Calu3 (cell line): ENCODE measurements at regions of chr2 and their contacts with region 1.

Region 1: DNA sequence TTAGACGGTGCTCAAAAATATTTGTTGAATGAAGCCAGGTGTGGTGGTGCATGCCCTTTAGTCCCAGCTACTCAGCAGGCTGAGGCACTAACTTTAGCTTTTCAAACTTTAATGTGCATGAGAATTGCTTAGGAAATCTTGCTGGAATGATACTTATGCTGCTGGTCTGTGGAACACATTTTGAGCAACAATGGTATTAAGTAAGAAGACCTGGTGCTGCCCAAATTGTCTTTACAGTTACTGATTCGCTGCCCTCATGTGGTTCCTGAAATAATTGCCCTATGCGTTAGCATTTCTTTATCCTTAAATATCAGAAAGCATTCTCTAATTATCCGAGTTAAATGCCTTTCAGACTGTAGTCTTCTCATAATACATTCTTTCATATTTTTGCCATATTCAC is 76.0 kb upstream of the SESTD1 start:
- DNase-seq: peak; percentile 12
- H3K4me3 Mint-ChIP-seq: no peak overlapping the region
- H3K27ac Mint-ChIP-seq: no peak overlapping the region
- H3K4me1 Mint-ChIP-seq: peaks cover 38% of the 10 kb centered on the region
- H3K27me3 Mint-ChIP-seq: no peaks in the 10 kb centered on the region
- CTCF ChIP-seq: peak; percentile 22

Region 2: DNA sequence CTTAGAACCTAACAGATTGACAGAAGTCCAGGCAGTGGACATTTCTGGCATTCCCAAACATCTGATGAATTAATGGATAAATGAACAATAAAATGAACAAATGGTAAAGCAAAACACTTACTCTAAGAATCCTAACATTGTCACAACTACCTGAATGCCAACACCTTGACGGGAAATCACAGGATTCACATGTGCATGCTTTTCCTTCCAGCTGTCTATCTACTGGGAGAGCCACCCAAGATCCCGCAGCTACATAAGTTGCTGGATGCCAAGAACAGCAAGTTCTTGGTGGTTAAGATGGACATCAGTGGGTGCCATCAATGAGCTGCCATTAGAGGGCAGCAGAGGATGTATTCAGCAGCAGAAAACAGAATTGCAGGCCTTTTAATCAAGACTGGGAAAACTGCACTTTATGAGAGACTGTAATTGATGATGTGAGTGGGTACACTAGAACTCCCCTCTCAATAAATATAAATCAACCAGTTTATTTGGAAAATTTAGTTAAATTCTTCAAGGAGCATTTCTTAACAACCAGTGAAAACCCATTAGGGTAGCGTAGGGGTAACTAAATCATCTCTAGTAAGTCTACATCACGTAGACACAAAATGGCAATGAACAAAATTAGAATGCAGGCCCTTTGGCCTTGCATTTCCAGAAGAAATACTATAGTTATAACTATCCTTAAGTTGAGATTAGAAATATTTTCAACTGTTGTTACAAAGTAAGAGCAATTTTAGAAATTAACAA is 121.6 kb before region 1 on chr2:
- CTCF ChIA-PET with region 1: interaction called, 3 read pairs
- intact Hi-C with region 1: loop called (anchors 5 kb)
- DNase-seq: peak; percentile 72
- H3K4me3 Mint-ChIP-seq: no peak overlapping the region
- H3K27ac Mint-ChIP-seq: no peak overlapping the region
- H3K4me1 Mint-ChIP-seq: peaks cover 24% of the 10 kb centered on the region
- H3K27me3 Mint-ChIP-seq: no peaks in the 10 kb centered on the region
- CTCF ChIP-seq: peak; percentile 80

Region 3: GRCh38 chr2:179239195-179239594 is 101.5 kb before region 1 on chr2:
- CTCF ChIA-PET with region 1: no interaction called
- intact Hi-C with region 1: loop called (anchors 5 kb)
- DNase-seq: no peak
- H3K4me3 Mint-ChIP-seq: no peak overlapping the region
- H3K27ac Mint-ChIP-seq: peak overlapping the region; percentile 53
- H3K4me1 Mint-ChIP-seq: peaks cover 76% of the 10 kb centered on the region
- H3K27me3 Mint-ChIP-seq: no peaks in the 10 kb centered on the region
- CTCF ChIP-seq: no peak

Region 4: DNA sequence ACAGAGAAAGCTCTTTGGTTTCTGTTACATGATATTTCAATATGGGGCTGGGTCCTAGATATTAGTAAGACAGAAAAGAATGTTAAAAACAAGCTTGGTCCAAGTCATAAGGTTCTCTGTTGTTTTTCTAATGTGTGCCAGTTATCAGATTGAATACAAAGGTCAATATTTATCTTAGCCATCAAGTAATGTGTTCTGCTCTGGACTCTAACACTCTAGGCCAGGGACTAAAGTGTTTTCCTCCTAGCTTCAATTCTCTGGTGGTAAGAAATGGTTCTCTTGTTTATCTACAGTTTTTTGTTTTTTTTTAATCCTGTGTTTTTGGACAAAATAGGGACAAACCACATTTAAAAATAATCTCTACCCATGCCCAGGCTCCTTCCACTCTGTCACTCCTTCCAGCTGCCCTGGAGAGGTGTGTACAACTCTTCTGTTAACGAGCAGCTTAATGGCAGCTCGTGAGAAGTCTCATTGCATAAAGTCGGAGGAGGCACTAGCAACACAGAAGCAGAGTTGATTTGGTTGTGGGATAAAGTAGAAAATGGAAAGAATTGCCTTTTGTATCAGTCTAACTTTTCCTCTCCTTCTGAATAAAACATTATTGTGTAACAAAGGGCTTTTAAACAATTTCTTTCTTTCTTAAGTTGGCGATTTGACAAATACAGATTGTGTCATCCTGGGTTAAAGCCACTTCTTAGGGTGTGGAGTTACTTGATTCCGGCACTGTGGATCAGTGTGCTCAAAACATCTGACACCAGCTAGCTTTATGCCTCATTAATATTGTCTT is 68.1 kb before region 1 on chr2:
- CTCF ChIA-PET with region 1: no interaction called
- intact Hi-C with region 1: loop called (anchors 1 kb)
- DNase-seq: no peak
- H3K4me3 Mint-ChIP-seq: peak overlapping the region; percentile 53
- H3K27ac Mint-ChIP-seq: peak overlapping the region; percentile 2
- H3K4me1 Mint-ChIP-seq: peaks cover 79% of the 10 kb centered on the region
- H3K27me3 Mint-ChIP-seq: no peaks in the 10 kb centered on the region
- CTCF ChIP-seq: no peak